Breast epithelium (tissue), 4 donors: ENCODE measurements at regions of chr10 and their contacts with region 1.

Region 1: GRCh38 chr10:132469197-132469884 is 68.2 kb upstream of the INPP5A start:
- DNase-seq: no peak
- H3K4me3 ChIP-seq: no peak overlapping the region
- H3K27ac ChIP-seq: peak overlapping the region in 1 of 2 donors; percentile 10
- H3K4me1 ChIP-seq: peaks cover 5 to 6% of the 10 kb centered on the region in 2 donors
- H3K27me3 ChIP-seq: peaks cover 0 to 4% of the 10 kb centered on the region in 2 donors
- CTCF ChIP-seq: no peak
- POLR2A ChIP-seq: no peak

Region 2: DNA sequence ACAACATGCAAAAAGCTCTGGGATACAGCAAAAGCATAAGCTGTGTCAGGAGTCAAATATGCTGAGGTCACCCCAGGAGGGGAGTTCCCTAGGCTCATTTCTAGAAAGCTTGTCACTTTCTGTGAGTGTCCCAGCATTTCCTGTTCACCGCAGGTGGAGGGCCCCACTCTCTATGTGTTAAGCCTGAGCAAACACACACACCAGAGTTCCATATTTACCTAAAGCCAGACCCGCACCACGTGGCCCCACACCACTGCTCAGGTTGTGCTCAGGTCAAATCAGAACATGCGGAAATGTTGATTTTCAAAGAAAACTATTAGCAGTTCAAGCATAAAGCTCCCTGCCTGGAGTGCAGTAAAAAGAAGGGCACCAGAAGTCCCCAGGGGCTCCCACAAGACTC is 828.1 kb before region 1 on chr10:
- intact Hi-C with region 1: no loop called
- DNase-seq: no peak
- H3K4me3 ChIP-seq: no peak overlapping the region
- H3K27ac ChIP-seq: no peak overlapping the region
- H3K4me1 ChIP-seq: no peaks in the 10 kb centered on the region
- H3K27me3 ChIP-seq: peaks cover 0 to 4% of the 10 kb centered on the region in 2 donors
- CTCF ChIP-seq: no peak
- POLR2A ChIP-seq: no peak

Region 3: GRCh38 chr10:132632851-132633684 is 163.7 kb after region 1 on chr10:
- intact Hi-C with region 1: loop called (anchors 1 kb)
- DNase-seq: no peak
- H3K4me3 ChIP-seq: no peak overlapping the region
- H3K27ac ChIP-seq: peak overlapping the region; percentile 58 to 86
- H3K4me1 ChIP-seq: peaks cover 0 to 16% of the 10 kb centered on the region in 2 donors
- H3K27me3 ChIP-seq: no peaks in the 10 kb centered on the region
- CTCF ChIP-seq: no peak
- POLR2A ChIP-seq: no peak

Region 4: GRCh38 chr10:133009222-133009954 is 540.0 kb after region 1 on chr10:
- intact Hi-C with region 1: no loop called
- DNase-seq: peak; percentile 39 to 65
- H3K4me3 ChIP-seq: peak overlapping the region; percentile 16 to 41 (median 23)
- H3K27ac ChIP-seq: no peak overlapping the region
- H3K4me1 ChIP-seq: no peaks in the 10 kb centered on the region
- H3K27me3 ChIP-seq: peaks cover 0 to 4% of the 10 kb centered on the region in 2 donors
- CTCF ChIP-seq: no peak
- POLR2A ChIP-seq: no peak